ENCODE measurements at regions of chr17 and their contacts with region 1.

Region 1: GRCh38 chr17:57130761-57131461 is 45.9 kb downstream of the AKAP1 start:
- DNase-seq: peak; percentile 72 to 91 (median 80)
- ATAC-seq: peak; percentile 97
- H3K4me3 ChIP-seq: no peak overlapping the region
- H3K4me3 Mint-ChIP-seq: no peak overlapping the region
- H3K27ac ChIP-seq: no peak overlapping the region
- H3K27ac Mint-ChIP-seq: no peak overlapping the region
- H3K4me1 ChIP-seq: peaks cover 4% of the 10 kb centered on the region
- H3K4me1 Mint-ChIP-seq: peaks cover 11% of the 10 kb centered on the region
- H3K27me3 ChIP-seq: no peaks in the 10 kb centered on the region
- H3K27me3 Mint-ChIP-seq: no peaks in the 10 kb centered on the region
- CTCF ChIP-seq: peak; percentile 77

Region 2: GRCh38 chr17:57021226-57021940 is 109.5 kb before region 1 on chr17:
- CTCF ChIA-PET with region 1: no interaction called
- POLR2A ChIA-PET with region 1: no interaction called
- intact Hi-C with region 1: no loop called
- DNase-seq: no peak
- ATAC-seq: no peak
- H3K4me3 ChIP-seq: no peak overlapping the region
- H3K4me3 Mint-ChIP-seq: no peak overlapping the region
- H3K27ac ChIP-seq: no peak overlapping the region
- H3K27ac Mint-ChIP-seq: no peak overlapping the region
- H3K4me1 ChIP-seq: no peaks in the 10 kb centered on the region
- H3K4me1 Mint-ChIP-seq: no peaks in the 10 kb centered on the region
- H3K27me3 ChIP-seq: peaks cover 0 to 13% of the 10 kb centered on the region in 2 experiments
- H3K27me3 Mint-ChIP-seq: peaks cover 41% of the 10 kb centered on the region
- CTCF ChIP-seq: no peak

Region 3: DNA sequence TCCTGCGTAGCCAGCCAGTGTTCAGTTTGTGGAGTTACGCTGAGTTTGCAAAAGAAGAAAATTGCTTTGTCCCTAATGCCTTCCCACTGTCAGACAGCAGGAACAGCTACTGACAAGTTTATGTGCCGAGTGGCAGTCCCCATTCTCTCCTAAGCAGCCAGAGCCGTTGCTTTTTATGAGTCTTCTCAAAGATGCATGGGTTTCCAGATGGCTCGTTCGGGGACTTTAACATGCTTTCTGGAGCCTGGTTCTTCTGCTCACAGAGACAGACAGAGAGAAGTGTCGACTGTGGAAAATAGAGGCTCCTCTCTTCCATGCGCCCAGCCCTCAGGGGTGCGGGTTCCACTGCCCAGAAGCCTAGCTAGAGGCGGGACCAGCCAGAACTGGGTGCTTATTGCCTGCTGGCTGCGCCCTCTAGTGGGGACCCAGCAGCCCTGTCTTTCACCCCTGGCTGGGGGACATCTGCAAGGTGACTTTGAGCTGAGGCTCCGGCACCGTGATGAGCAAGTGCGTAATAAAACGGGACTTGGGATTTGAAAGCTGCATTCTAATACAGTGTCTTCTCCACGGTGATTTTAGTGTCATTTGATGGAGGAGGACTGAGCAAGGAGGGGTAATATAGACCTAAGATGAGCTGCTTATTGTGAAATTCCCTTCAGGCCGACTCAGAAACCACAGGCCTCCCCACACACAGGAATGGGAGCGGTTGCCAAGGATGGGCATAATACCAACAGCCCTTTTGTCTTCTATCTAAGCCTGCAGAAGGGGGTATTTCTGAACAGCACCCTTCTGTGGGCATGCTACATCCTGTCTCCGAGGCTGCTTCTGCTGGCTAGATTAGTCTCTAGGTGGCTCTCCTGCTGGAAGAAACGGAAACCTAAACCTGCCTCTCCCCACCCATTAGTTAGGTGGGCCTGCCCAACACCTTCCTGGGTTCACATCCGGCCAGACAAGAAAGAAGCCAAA is 541.0 kb after region 1 on chr17:
- CTCF ChIA-PET with region 1: interaction called, 4 read pairs
- POLR2A ChIA-PET with region 1: no interaction called
- intact Hi-C with region 1: loop called (anchors 5 kb)
- DNase-seq: peak; percentile 48 to 84 (median 62)
- ATAC-seq: peak; percentile 90
- H3K4me3 ChIP-seq: no peak overlapping the region
- H3K4me3 Mint-ChIP-seq: peak overlapping the region; percentile 48
- H3K27ac ChIP-seq: no peak overlapping the region
- H3K27ac Mint-ChIP-seq: peak overlapping the region; percentile 68
- H3K4me1 ChIP-seq: peaks cover 22% of the 10 kb centered on the region
- H3K4me1 Mint-ChIP-seq: peaks cover 11% of the 10 kb centered on the region
- H3K27me3 ChIP-seq: no peaks in the 10 kb centered on the region
- H3K27me3 Mint-ChIP-seq: no peaks in the 10 kb centered on the region
- CTCF ChIP-seq: peak; percentile 77

Region 4: GRCh38 chr17:57833179-57833939 is 702.4 kb after region 1 on chr17:
- CTCF ChIA-PET with region 1: interaction called, 4 read pairs
- POLR2A ChIA-PET with region 1: no interaction called
- intact Hi-C with region 1: loop called (anchors 1 to 2 kb)
- DNase-seq: peak; percentile 43 to 86 (median 58)
- ATAC-seq: peak; percentile 85
- H3K4me3 ChIP-seq: peak overlapping the region; percentile 46
- H3K4me3 Mint-ChIP-seq: no peak overlapping the region
- H3K27ac ChIP-seq: no peak overlapping the region
- H3K27ac Mint-ChIP-seq: no peak overlapping the region
- H3K4me1 ChIP-seq: peaks cover 6% of the 10 kb centered on the region
- H3K4me1 Mint-ChIP-seq: peaks cover 6% of the 10 kb centered on the region
- H3K27me3 ChIP-seq: no peaks in the 10 kb centered on the region
- H3K27me3 Mint-ChIP-seq: no peaks in the 10 kb centered on the region
- CTCF ChIP-seq: peak; percentile 96